ENCODE measurements at regions of chr3 and their contacts with region 1.

Region 1: GRCh38 chr3:10758304-10759061 is 57.5 kb upstream of the SLC6A11 start:
- DNase-seq: peak; percentile 44
- H3K4me3 ChIP-seq: no peak overlapping the region
- CTCF ChIP-seq: peak; percentile 56

Region 2: GRCh38 chr3:10646531-10647335 is 111.8 kb before region 1 on chr3:
- in situ Hi-C with region 1: loop called (anchors 5 kb)
- DNase-seq: no peak
- H3K4me3 ChIP-seq: no peak overlapping the region
- CTCF ChIP-seq: no peak

Region 3: DNA sequence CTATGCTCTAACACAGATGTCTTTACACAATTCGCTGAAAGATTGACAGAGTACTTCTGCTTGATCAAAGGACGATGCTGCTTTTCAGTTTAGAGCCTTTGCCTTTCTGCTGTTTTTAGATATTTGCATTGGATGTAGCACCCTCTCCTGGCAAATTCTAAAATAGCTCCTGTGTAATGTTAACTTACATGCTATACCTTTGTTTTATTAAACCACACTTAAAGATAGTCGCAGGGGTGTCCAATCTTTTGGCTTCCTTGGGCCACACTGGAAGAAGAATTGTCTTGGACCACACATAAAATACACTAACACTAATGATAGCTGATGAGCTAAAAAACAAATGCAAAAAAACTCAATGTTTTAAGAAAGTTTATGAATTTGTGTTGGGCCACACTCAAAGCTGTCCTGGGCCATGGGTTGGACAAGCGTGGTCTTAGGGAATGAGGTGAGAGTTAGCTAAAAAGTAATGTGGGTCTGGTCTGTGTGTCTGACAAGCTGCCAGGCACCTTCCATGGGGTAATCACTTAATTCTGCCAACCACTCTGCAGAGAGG is 576.6 kb after region 1 on chr3:
- in situ Hi-C with region 1: loop called (anchors 25 kb)
- DNase-seq: peak; percentile 63
- H3K4me3 ChIP-seq: no peak overlapping the region
- CTCF ChIP-seq: peak; percentile 58